Activated naive CD4-positive, alpha-beta T cell treated with anti-CD3 and anti-CD28 coated beads for 36 hours (primary cell): ENCODE measurements at regions of chr3 and their contacts with region 1.

Region 1: GRCh38 chr3:108477511-108478147 is 32.8 kb downstream of the MYH15 start:
- DNase-seq: peak; percentile 75
- H3K4me3 Mint-ChIP-seq: no peak overlapping the region
- H3K27ac Mint-ChIP-seq: no peak overlapping the region
- H3K4me1 Mint-ChIP-seq: no peaks in the 10 kb centered on the region
- H3K27me3 Mint-ChIP-seq: no peaks in the 10 kb centered on the region

Region 2: DNA sequence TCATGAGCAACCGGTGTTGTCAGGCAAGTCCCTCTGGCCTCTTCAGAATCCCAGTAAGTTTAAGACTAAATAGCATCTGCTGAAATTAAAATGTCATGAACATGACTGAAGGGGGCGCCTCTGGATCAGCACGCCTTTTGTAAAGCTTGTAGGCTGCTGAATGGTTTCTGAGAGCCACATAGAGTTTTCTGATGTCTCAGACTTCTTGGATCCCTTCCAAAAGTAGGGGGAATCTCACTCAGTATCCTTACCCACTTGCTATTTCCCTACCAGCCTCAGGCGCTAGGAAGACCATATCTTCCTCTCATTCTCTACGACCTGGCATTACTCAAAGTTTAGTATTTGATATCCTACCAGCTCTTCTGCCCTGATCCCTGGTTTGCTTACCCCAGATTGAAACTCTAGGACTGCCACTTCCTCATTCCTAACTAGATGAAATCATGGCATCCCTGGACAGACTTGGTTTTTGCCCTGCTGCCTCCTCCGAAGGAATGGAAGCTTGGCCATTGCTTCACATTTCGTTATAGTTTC is 324.1 kb before region 1 on chr3:
- CTCF ChIA-PET with region 1: interaction called, 40 read pairs
- intact Hi-C with region 1: loop called (anchors 1 kb)
- DNase-seq: peak; percentile 79
- H3K4me3 Mint-ChIP-seq: no peak overlapping the region
- H3K27ac Mint-ChIP-seq: no peak overlapping the region
- H3K4me1 Mint-ChIP-seq: peaks cover 10% of the 10 kb centered on the region
- H3K27me3 Mint-ChIP-seq: no peaks in the 10 kb centered on the region

Region 3: DNA sequence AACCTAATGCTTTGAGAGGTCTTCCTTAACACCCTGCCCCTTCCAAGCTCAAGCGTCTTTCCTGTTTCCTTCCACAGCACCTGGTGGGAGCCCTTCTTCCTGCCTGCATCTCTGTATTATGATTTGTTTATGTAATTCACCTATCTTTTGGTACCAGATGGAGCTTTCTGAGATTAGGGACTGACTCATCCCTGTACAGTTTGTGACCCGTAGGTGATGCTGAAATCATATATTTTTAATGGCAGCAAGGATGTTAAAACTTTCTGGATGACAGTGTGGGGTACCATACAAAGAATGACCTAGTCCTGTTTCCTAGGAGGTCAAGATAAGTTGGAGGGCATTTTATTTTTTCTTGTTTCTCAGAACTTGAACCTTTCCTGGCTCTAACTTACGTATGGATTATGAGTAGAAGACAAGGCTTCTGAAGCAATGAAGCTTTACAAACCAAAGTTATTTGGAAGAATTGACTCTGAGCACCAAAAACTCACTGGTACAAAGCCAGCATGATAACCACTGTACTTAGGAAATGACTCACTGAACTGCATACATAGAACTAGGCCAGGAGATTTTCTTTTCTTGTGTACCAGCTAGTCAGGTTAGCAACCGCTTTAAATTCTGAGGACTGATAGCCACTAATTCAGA is 134.7 kb before region 1 on chr3:
- CTCF ChIA-PET with region 1: no interaction called
- intact Hi-C with region 1: loop called (anchors 5 kb)
- DNase-seq: no peak
- H3K4me3 Mint-ChIP-seq: no peak overlapping the region
- H3K27ac Mint-ChIP-seq: no peak overlapping the region
- H3K4me1 Mint-ChIP-seq: peaks cover 13% of the 10 kb centered on the region
- H3K27me3 Mint-ChIP-seq: no peaks in the 10 kb centered on the region

Region 4: DNA sequence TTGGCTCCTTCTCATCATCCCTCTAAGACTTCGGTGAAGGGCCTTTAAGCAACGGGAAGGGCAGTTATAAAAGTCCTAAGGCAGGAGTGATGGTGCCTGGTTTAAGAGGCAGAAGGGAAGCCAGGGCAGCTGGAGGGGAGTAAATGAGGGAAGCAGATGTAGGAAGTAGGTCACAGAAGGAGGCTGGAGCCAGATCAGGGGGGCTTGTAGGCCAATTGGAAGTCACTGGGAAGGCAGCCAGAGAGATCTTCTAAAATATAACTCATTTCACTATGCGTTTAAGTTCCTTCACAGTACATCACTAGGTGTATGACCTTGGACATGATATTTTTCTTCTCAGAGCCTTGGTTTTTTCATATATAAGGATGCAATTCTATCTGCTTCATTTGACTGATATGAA is 62.0 kb before region 1 on chr3:
- CTCF ChIA-PET with region 1: interaction called, 5 read pairs
- intact Hi-C with region 1: loop called (anchors 5 kb)
- DNase-seq: no peak
- H3K4me3 Mint-ChIP-seq: no peak overlapping the region
- H3K27ac Mint-ChIP-seq: no peak overlapping the region
- H3K4me1 Mint-ChIP-seq: peaks cover 18% of the 10 kb centered on the region
- H3K27me3 Mint-ChIP-seq: peaks cover 12% of the 10 kb centered on the region

Region 5: GRCh38 chr3:108459225-108459624 is 18.4 kb before region 1 on chr3:
- CTCF ChIA-PET with region 1: interaction called, 12 read pairs
- intact Hi-C with region 1: no loop called
- DNase-seq: no peak
- H3K4me3 Mint-ChIP-seq: no peak overlapping the region
- H3K27ac Mint-ChIP-seq: no peak overlapping the region
- H3K4me1 Mint-ChIP-seq: no peaks in the 10 kb centered on the region
- H3K27me3 Mint-ChIP-seq: peaks cover 3% of the 10 kb centered on the region

Region 6: DNA sequence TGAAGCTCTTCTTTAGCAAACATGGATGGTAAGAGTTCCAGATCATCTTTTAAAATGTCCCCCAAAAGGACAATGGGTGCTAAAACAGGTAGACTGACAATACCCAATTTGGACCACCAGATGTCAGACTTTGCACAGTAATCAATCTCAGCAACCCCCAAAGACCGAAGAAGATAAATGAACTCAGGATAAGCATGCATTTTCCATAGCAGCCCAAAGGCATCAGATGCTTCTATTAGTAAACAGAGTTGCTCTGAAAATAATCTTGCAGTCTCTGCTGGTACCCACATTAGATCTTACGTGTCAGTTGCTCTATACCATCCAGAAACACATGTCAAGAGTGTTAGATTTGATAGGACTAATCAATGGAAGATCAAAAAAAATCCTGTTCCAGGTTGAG is 12.1 kb after region 1 on chr3:
- CTCF ChIA-PET with region 1: interaction called, 9 read pairs
- intact Hi-C with region 1: loop called (anchors 1 kb)
- DNase-seq: peak; percentile 53
- H3K4me3 Mint-ChIP-seq: no peak overlapping the region
- H3K27ac Mint-ChIP-seq: no peak overlapping the region
- H3K4me1 Mint-ChIP-seq: peaks cover 2% of the 10 kb centered on the region
- H3K27me3 Mint-ChIP-seq: no peaks in the 10 kb centered on the region

Region 7: DNA sequence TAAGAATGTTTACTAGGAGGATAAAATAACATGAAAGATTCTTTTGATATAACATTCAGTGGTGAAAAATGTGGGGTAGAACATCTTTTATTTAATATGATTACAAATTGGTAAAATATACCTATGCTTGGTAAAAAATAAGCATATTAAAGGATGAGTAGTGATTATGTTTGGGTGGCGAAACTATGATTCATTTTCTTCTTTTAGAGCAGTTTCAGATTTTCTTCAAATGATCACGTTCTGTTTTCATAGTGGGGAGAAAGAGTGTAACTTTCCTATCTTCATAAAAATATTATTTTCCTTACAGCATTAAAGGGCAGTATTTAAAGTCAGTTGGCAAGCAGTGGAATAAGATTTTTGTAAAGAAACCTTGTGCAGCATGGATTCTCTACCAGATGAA is 127.4 kb after region 1 on chr3:
- CTCF ChIA-PET with region 1: no interaction called
- intact Hi-C with region 1: no loop called
- DNase-seq: no peak
- H3K4me3 Mint-ChIP-seq: no peak overlapping the region
- H3K27ac Mint-ChIP-seq: no peak overlapping the region
- H3K4me1 Mint-ChIP-seq: peaks cover 47% of the 10 kb centered on the region
- H3K27me3 Mint-ChIP-seq: no peaks in the 10 kb centered on the region